ENCODE measurements at regions of chr6 and their contacts with region 1.

Region 1: DNA sequence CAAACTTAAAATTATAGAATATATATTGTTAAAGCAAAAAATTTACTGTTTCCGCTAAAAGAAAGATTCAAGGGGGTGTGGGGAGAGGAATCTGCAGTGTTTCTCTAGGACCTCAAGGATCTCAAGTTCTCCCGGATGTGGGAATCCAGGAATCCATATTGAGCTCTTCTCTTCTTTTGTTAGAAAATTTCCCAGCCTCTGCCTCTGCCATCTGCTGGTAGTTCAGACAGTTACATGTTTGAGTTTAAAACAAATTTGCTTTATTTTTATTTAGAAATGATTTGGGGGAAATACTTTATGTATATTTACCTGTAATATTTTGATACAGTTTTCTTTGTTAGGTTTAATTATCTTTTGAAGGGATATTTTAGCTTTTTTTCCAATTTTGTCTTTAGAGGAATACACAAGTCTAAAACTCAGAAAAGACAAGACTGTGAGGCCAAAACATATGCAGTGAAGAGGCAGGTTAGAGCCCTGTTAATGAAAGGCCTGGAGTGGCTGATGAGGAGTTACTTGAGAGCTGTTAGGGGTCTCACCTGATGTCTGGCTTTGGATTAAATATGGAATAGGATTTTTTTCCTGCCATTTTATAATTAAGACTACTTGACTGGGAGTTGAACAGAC is 268.8 kb downstream of the ARID1B start:
- DNase-seq: no peak
- ATAC-seq: peak; percentile 37 to 62 (median 53)
- H3K4me3 ChIP-seq: no peak overlapping the region
- H3K27ac ChIP-seq: no peak overlapping the region
- H3K4me1 ChIP-seq: peaks cover 0 to 6% (median 0%) of the 10 kb centered on the region in 4 donors
- H3K27me3 ChIP-seq: no peaks in the 10 kb centered on the region
- CTCF ChIP-seq: peak; percentile 40 to 57 (median 52)
- POLR2A ChIP-seq: no peak

Region 2: GRCh38 chr6:156564127-156564806 is 481.7 kb before region 1 on chr6:
- intact Hi-C with region 1: loop called in 1 of 2 experiments (anchors 10 kb)
- DNase-seq: peak; percentile 81 to 84 (median 81)
- ATAC-seq: peak; percentile 98 to 100 (median 100)
- H3K4me3 ChIP-seq: no peak overlapping the region
- H3K27ac ChIP-seq: no peak overlapping the region
- H3K4me1 ChIP-seq: no peaks in the 10 kb centered on the region
- H3K27me3 ChIP-seq: no peaks in the 10 kb centered on the region
- CTCF ChIP-seq: peak; percentile 89 to 96 (median 95)
- POLR2A ChIP-seq: no peak

Region 3: DNA sequence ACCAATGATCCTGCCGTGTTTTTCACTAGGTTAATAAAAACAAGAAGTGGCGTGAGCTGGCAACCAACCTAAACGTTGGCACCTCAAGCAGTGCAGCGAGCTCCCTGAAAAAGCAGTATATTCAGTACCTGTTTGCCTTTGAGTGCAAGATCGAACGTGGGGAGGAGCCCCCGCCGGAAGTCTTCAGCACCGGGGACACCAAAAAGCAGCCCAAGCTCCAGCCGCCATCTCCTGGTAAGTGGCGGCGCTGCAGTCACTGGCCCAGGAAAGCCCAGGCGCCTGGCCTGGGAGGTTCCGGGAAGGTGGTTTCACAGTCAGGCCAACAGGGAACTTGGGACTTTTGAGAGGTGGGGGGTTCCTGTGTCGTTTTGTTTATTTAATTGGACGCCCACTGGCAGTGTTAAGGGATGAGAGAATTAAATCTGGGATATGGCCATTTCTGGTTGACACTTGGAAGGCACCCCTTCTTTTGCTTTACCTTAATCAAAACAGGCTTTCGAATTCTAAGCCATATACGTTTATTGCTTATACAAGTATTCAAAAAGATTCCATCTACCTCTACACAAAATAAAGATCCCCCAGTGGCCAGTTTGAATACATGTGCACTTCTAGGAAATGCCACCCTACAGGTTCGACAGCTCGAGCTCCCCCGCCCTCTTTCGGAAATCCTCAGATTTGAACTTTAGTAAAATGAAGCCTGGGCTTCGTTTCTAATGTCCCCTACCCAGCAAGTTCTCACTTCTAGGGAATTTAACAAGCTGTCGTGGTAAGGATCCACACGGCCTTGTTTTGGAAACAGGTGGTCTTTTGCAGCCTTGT is 138.5 kb after region 1 on chr6:
- intact Hi-C with region 1: loop called in 1 of 2 experiments (anchors 10 kb)
- DNase-seq: peak; percentile 78 to 85 (median 84)
- ATAC-seq: peak; percentile 93 to 97 (median 96)
- H3K4me3 ChIP-seq: no peak overlapping the region
- H3K27ac ChIP-seq: no peak overlapping the region
- H3K4me1 ChIP-seq: peaks cover 0 to 21% (median 7%) of the 10 kb centered on the region in 4 donors
- H3K27me3 ChIP-seq: no peaks in the 10 kb centered on the region
- CTCF ChIP-seq: peak; percentile 91 to 94 (median 92)
- POLR2A ChIP-seq: no peak

Region 4: GRCh38 chr6:157535339-157536222 is 489.6 kb after region 1 on chr6:
- intact Hi-C with region 1: no loop called
- DNase-seq: no peak
- ATAC-seq: peak in 1 of 4 donors; percentile 6
- H3K4me3 ChIP-seq: no peak overlapping the region
- H3K27ac ChIP-seq: peak overlapping the region; percentile 8 to 58 (median 26)
- H3K4me1 ChIP-seq: peaks cover 0 to 44% (median 26%) of the 10 kb centered on the region in 4 donors
- H3K27me3 ChIP-seq: no peaks in the 10 kb centered on the region
- CTCF ChIP-seq: no peak
- POLR2A ChIP-seq: no peak

Measured in right lobe of liver (tissue), 6 donors.